K562 (cell line): ENCODE measurements at regions of chr14 and their contacts with region 1.

Region 1: DNA sequence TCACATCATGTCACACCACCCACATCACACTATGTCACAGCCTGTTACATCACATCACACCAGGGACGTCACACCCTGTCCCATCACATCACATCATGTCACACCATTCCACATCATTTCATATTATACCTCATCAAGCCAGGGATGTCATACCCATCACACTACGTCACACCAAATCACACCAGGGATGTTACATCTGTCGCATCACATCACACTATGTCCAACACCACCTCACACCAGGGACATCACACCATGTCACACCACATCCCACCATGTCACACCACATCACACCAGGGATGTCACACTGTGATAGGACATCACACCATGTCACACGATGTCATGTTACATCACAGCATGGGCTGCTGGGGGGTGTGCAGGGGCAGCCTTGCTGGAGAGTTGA is 110.6 kb downstream of the TMEM121 start:
- DNase-seq: no peak
- ATAC-seq: no peak; the same call in 2 of the 3 replicates
- H3K4me3 ChIP-seq: no peak overlapping the region
- H3K27ac ChIP-seq: no peak overlapping the region
- H3K4me1 ChIP-seq: no peaks in the 10 kb centered on the region
- H3K27me3 ChIP-seq: no peaks in the 10 kb centered on the region
- CTCF ChIP-seq: no peak
- EP300 ChIP-seq: no peak
- POLR2A ChIP-seq: no peak
- RAD21 ChIP-seq: no peak

Region 2: GRCh38 chr14:105568859-105569708 is 67.9 kb before region 1 on chr14:
- CTCF ChIA-PET with region 1: no interaction called
- POLR2A ChIA-PET with region 1: no interaction called
- in situ Hi-C with region 1: no loop called
- intact Hi-C with region 1: no loop called
- DNase-seq: no peak
- ATAC-seq: no peak
- H3K4me3 ChIP-seq: no peak overlapping the region
- H3K27ac ChIP-seq: no peak overlapping the region
- H3K4me1 ChIP-seq: no peaks in the 10 kb centered on the region
- H3K27me3 ChIP-seq: no peaks in the 10 kb centered on the region
- CTCF ChIP-seq: no peak
- EP300 ChIP-seq: no peak
- POLR2A ChIP-seq: no peak
- RAD21 ChIP-seq: no peak

Region 3: GRCh38 chr14:105659960-105660476 is 23.1 kb after region 1 on chr14:
- CTCF ChIA-PET with region 1: no interaction called
- POLR2A ChIA-PET with region 1: no interaction called
- in situ Hi-C with region 1: no loop called
- intact Hi-C with region 1: no loop called
- DNase-seq: no peak
- ATAC-seq: no peak
- H3K4me3 ChIP-seq: no peak overlapping the region
- H3K27ac ChIP-seq: no peak overlapping the region
- H3K4me1 ChIP-seq: no peaks in the 10 kb centered on the region
- H3K27me3 ChIP-seq: no peaks in the 10 kb centered on the region
- CTCF ChIP-seq: no peak
- EP300 ChIP-seq: no peak
- POLR2A ChIP-seq: no peak
- RAD21 ChIP-seq: no peak

Region 4: DNA sequence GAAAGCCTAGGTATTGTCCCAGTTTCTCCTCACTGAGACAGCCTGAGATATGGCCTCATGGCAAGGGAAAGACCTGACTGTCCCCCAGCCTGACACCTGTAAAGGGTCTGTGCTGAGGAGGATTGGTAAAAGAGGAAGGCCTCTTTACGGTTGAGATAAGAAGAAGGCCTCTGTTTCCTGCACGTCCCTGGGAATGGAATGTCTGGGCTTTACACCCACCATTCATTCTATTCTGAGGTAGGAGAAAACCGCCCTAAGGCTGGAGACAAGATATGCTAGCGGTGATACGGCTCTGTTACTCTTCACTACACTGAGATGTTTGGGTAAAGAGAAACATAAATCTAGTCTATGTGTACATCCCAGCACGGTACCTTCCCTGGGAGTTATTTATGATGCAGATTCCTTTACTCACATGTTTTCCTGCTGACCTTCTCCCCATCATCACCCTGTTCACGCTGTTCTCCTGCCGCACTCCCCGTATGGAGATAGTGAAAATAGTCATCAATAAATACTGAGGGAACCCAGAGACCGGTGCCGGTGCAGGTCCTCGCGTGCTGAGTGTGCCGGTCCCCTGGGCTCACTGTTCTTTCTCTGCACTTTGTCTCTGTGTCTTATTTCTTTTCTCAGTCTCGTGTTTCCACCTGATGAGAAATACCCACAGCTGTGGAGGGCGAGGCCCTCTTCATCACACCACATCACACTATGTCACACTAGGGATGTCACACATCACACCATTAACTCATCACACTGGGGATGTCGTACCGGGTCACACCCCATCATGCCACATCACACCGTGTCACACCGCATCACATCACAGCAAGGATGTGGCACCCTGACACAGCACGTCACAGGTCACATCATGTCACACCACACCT is 96.0 kb after region 1 on chr14:
- CTCF ChIA-PET with region 1: no interaction called
- POLR2A ChIA-PET with region 1: no interaction called
- in situ Hi-C with region 1: loop called (anchors 5 kb)
- intact Hi-C with region 1: no loop called
- DNase-seq: no peak
- ATAC-seq: no peak
- H3K4me3 ChIP-seq: no peak overlapping the region
- H3K27ac ChIP-seq: no peak overlapping the region
- H3K4me1 ChIP-seq: no peaks in the 10 kb centered on the region
- H3K27me3 ChIP-seq: peaks cover 0 to 8% of the 10 kb centered on the region in 2 experiments; a peak in 2 of 5 replicates
- CTCF ChIP-seq: no peak
- EP300 ChIP-seq: no peak
- POLR2A ChIP-seq: no peak
- RAD21 ChIP-seq: no peak